ENCODE measurements at regions of chr3 and their contacts with region 1.

Region 1: DNA sequence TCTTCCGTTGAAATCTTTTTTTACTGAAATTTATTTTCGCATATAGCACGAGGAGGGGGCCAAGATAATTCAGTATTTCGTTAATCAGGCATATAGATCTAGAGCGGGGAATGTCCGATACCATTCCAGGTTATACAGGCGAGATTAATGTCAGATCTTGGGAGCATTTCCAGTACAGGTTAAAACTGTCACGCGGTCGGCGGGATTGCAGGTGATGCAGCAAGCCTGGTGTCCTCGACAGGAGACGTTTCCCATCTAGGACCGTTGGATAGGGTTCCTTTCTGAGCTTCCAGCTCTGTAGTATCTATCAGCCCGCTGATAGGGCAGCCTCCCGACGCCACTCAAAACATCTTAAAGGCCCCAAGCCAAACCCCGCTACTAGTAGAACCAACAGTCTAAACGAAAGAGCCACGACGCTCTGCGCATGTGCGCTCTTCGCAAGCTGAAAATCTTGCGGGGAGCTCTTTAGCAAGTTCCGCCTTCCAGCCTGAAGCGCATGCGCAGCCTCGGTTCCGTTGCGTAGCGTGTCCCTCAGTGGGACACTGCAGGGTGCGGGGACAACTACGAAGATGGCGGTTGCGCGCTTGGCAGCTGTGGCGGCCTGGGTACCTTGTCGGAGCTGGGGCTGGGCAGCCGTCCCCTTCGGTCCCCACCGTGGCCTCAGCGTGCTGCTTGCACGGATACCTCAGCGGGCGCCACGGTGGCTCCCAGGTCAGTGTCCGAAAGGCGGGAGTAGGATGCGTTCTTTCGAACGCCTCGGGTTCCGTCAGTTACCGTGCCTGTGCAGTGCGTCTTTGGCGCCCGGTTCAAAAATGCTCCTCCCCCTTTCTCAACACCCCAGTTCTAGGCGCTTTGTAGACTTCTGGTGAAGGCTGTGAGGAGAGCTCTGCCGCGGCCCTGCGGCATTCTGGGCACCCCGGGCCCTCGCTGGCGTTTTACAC is at the start of gene ABHD10:
- DNase-seq: peak; percentile 93
- ATAC-seq: peak; percentile 96
- H3K4me3 Mint-ChIP-seq: peak within 1 kb of the TSS; percentile 83
- H3K27ac Mint-ChIP-seq: peak within 1 kb of the TSS; percentile 88
- H3K4me1 Mint-ChIP-seq: peaks cover 13% of the 10 kb centered on the region
- H3K27me3 Mint-ChIP-seq: no peaks in the 10 kb centered on the region
- CTCF ChIP-seq: no peak
- total RNA-seq, gene ABHD10: 27.6 to 32.4 TPM (median 29.2 TPM) in 3 replicates

Region 2: GRCh38 chr3:111859974-111860859 is 118.5 kb before region 1 on chr3:
- CTCF ChIA-PET with region 1: interaction called, 16 read pairs
- POLR2A ChIA-PET with region 1: interaction called, 8 read pairs
- DNase-seq: peak; percentile 84
- ATAC-seq: peak; percentile 68
- H3K4me3 Mint-ChIP-seq: peak overlapping the region; percentile 96
- H3K27ac Mint-ChIP-seq: peak overlapping the region; percentile 95
- H3K4me1 Mint-ChIP-seq: peaks cover 58% of the 10 kb centered on the region
- H3K27me3 Mint-ChIP-seq: peaks cover 23% of the 10 kb centered on the region
- CTCF ChIP-seq: no peak

Region 3: GRCh38 chr3:111989061-111989678 is 10.4 kb after region 1 on chr3:
- CTCF ChIA-PET with region 1: interaction called, 25 read pairs
- POLR2A ChIA-PET with region 1: interaction called, 5 read pairs
- DNase-seq: no peak
- ATAC-seq: peak; percentile 80
- H3K4me3 Mint-ChIP-seq: no peak overlapping the region
- H3K27ac Mint-ChIP-seq: no peak overlapping the region
- H3K4me1 Mint-ChIP-seq: peaks cover 4% of the 10 kb centered on the region
- H3K27me3 Mint-ChIP-seq: no peaks in the 10 kb centered on the region
- CTCF ChIP-seq: no peak

Region 4: DNA sequence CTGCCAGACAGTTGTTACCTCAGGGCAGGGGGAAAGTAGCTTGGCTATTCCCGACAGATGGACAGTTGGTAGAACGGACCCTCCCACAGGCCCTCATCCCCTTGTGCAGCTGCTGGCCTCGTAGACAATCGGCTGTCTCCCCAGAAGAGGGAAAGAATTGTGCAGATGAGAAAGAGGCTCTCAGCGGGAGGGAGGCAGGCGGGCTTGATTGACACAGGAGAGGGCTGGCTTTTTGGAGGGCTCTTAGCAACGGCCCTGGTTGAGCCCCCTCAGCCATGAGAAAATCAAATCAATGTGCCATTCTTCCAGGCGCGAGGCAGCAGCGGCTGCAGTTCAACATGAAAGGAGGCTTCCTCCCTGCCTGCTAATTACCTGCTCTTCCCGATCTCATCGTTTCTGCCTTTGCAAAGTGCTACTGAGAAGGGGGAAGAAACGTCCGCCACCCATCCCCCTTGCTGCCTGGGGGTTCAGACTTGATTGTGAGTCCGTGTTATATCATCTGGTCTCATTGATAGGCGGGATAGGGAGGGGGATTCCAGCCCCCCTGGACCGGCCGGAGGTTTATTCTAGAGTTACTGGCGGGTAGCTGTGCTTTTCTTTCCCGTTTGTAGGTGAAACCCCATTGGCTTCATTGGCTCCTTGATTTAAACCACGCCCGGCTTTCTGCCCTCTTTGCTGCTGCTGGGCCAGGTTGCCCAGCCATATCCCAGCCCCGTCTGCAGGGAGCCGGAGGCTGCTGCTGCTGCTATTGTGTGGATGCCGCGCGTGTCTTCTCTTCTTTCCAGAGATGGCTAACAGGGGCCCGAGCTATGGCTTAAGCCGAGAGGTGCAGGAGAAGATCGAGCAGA is 20.1 kb after region 1 on chr3 and contains the start of gene TAGLN3:
- CTCF ChIA-PET with region 1: interaction called, 14 read pairs
- POLR2A ChIA-PET with region 1: interaction called, 5 read pairs
- DNase-seq: peak; percentile 54
- ATAC-seq: peak; percentile 86
- H3K4me3 Mint-ChIP-seq: peak within 1 kb of the TSS; percentile 90
- H3K27ac Mint-ChIP-seq: no peak within 1 kb of the TSS
- H3K4me1 Mint-ChIP-seq: peaks cover 22% of the 10 kb centered on the region
- H3K27me3 Mint-ChIP-seq: peaks cover 64% of the 10 kb centered on the region
- CTCF ChIP-seq: no peak
- total RNA-seq, gene TAGLN3: 2.8 to 3.3 TPM (median 2.8 TPM) in 3 replicates